PC-3 (cell line): ENCODE measurements at regions of chr12 and their contacts with region 1.

Region 1: DNA sequence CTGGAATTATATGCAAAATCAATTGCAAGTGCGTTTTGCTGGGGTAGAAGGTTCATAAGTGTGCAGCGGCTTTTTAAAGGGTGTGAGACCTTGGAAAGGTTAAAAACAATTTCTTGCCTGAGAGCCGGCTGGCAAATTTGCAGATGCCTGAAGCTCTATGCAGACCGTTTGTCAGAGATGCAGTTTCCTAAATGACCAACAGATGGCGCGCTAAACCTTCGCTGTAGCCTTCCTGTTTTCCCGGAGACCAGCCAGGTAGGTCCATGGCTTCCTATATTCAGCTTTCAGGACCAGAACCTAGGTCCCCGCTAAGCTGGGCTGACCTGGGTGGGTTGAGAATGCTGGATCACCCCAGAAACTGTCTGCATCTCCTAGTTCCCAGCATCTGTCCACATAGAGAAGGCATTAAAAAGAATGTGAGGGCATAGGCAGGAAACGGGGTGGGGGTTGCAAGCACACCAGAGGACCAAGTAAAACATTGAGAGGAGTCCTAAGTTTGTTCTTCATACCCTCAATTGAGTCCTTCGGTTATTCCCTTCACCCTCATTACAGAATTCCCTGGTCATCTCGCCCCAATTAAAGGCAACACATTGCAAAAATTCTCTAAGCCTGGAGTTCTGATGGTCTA is 5.7 kb upstream of the NOS1 start:
- DNase-seq: peak; percentile 96
- ATAC-seq: peak; percentile 78
- H3K4me3 ChIP-seq: no peak overlapping the region
- H3K27ac ChIP-seq: no peak overlapping the region
- H3K4me1 ChIP-seq: no peaks in the 10 kb centered on the region
- H3K27me3 ChIP-seq: peaks cover 31% of the 10 kb centered on the region
- CTCF ChIP-seq: peak; percentile 96

Region 2: DNA sequence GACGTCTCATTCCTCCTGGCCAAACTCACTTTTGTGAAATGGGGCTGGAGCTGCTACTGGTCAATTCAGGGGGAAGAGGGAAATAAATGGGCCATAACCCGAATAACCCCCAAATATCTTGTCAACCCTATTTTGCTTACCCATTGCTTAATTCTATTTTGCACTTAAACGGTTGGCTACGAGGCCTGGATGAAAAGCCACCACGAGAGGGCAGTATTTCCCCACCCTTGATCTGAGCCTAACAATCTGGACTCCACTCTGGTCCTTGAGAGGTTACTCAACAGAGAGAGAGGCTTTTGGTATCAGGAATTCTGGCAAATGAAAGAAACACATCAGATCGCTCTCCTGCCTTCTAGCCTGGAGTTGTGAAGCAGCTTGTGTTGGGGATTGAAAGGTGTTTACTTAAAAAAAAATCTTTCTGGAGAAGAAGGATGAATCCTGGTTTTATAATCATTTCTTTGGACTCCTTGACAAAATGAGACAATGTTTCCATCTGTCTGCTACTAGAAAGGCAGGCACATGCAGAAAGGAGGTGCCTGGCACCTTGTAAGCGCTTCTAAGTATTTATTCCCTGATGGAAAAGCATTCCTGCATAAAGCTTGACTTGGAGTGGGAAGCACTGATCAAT is 154.4 kb before region 1 on chr12:
- CTCF ChIA-PET with region 1: no interaction called
- POLR2A ChIA-PET with region 1: no interaction called
- intact Hi-C with region 1: loop called (anchors 1 kb)
- DNase-seq: peak; percentile 91
- ATAC-seq: peak; percentile 92
- H3K4me3 ChIP-seq: no peak overlapping the region
- H3K27ac ChIP-seq: no peak overlapping the region
- H3K4me1 ChIP-seq: peaks cover 8% of the 10 kb centered on the region
- H3K27me3 ChIP-seq: peaks cover 25% of the 10 kb centered on the region
- CTCF ChIP-seq: peak; percentile 99

Region 3: GRCh38 chr12:117321572-117321971 is 45.6 kb before region 1 on chr12:
- CTCF ChIA-PET with region 1: no interaction called
- POLR2A ChIA-PET with region 1: no interaction called
- intact Hi-C with region 1: no loop called
- DNase-seq: peak; percentile 62
- ATAC-seq: peak; percentile 88
- H3K4me3 ChIP-seq: no peak overlapping the region
- H3K27ac ChIP-seq: no peak overlapping the region
- H3K4me1 ChIP-seq: no peaks in the 10 kb centered on the region
- H3K27me3 ChIP-seq: peaks cover 36% of the 10 kb centered on the region
- CTCF ChIP-seq: no peak

Region 4: DNA sequence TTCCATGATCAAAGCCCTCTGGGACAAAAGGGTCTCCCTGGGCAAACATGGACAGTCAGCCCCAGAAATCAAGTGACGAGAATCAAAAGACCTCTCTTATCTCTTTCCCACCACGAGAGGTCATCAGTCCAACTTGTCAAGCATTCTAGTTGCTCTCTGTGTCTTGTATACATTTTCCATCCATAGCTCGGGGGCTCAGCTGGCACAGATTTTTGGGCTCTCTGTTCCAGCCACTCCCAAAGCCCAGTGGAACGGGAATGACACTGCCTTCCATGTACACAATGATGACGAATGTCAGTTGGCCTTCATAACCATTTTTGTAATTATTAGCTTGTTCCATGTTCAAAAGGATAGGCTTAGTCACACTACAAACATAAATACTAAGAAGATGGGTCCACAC is 35.4 kb before region 1 on chr12:
- CTCF ChIA-PET with region 1: interaction called, 5 read pairs
- POLR2A ChIA-PET with region 1: no interaction called
- intact Hi-C with region 1: loop called (anchors 1 kb)
- DNase-seq: peak; percentile 77
- ATAC-seq: peak; percentile 52
- H3K4me3 ChIP-seq: no peak overlapping the region
- H3K27ac ChIP-seq: no peak overlapping the region
- H3K4me1 ChIP-seq: peaks cover 10% of the 10 kb centered on the region; the same call in 1 of the 2 replicates
- H3K27me3 ChIP-seq: peaks cover 49% of the 10 kb centered on the region
- CTCF ChIP-seq: peak; percentile 47

Region 5: GRCh38 chr12:117388951-117389446 is 21.9 kb after region 1 on chr12:
- CTCF ChIA-PET with region 1: no interaction called
- POLR2A ChIA-PET with region 1: no interaction called
- intact Hi-C with region 1: no loop called
- DNase-seq: no peak
- ATAC-seq: no peak
- H3K4me3 ChIP-seq: no peak overlapping the region
- H3K27ac ChIP-seq: no peak overlapping the region
- H3K4me1 ChIP-seq: no peaks in the 10 kb centered on the region
- H3K27me3 ChIP-seq: no peaks in the 10 kb centered on the region
- CTCF ChIP-seq: no peak

Region 6: GRCh38 chr12:117587631-117588287 is 220.6 kb after region 1 on chr12:
- CTCF ChIA-PET with region 1: interaction called, 12 read pairs
- POLR2A ChIA-PET with region 1: no interaction called
- intact Hi-C with region 1: loop called (anchors 1 kb)
- DNase-seq: peak; percentile 76
- ATAC-seq: peak; percentile 90
- H3K4me3 ChIP-seq: no peak overlapping the region
- H3K27ac ChIP-seq: no peak overlapping the region
- H3K4me1 ChIP-seq: no peaks in the 10 kb centered on the region
- H3K27me3 ChIP-seq: no peaks in the 10 kb centered on the region
- CTCF ChIP-seq: peak; percentile 92

Region 7: GRCh38 chr12:117685110-117685926 is 318.2 kb after region 1 on chr12:
- CTCF ChIA-PET with region 1: interaction called, 4 read pairs
- POLR2A ChIA-PET with region 1: no interaction called
- intact Hi-C with region 1: loop called (anchors 5 kb)
- DNase-seq: peak; percentile 96
- ATAC-seq: peak; percentile 67
- H3K4me3 ChIP-seq: peak overlapping the region; percentile 55
- H3K27ac ChIP-seq: peak overlapping the region; percentile 98
- H3K4me1 ChIP-seq: peaks cover 57% of the 10 kb centered on the region
- H3K27me3 ChIP-seq: no peaks in the 10 kb centered on the region
- CTCF ChIP-seq: no peak

Region 8: DNA sequence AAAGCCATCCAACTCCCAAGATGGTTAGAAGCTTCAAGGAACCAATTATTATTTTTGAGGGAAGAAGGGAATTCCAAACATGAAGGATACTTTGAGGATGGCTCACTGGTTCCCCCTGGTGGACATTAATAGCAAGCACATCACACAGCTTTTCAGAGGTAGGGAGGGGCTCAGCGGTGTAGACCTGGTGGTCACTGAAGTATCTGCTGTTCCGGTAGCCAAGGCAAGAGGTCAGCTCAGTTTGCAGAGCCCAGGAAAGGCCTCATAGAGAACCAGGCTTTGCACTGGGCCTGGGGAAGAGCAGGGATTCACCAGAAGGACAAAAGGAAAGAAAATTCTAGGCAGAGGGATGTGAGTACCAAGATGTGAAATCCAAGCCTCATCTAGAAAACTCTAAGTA is 482.9 kb after region 1 on chr12:
- CTCF ChIA-PET with region 1: interaction called, 18 read pairs
- POLR2A ChIA-PET with region 1: no interaction called
- intact Hi-C with region 1: loop called (anchors 2 kb)
- DNase-seq: peak; percentile 80
- ATAC-seq: peak; percentile 35
- H3K4me3 ChIP-seq: no peak overlapping the region
- H3K27ac ChIP-seq: no peak overlapping the region
- H3K4me1 ChIP-seq: peaks cover 21% of the 10 kb centered on the region
- H3K27me3 ChIP-seq: no peaks in the 10 kb centered on the region
- CTCF ChIP-seq: peak; percentile 97